ENCODE measurements at regions of chr22 and their contacts with region 1.

Region 1: GRCh38 chr22:32776397-32777186 is 24.9 kb upstream of the TIMP3 start:
- DNase-seq: no peak
- H3K4me3 ChIP-seq: no peak overlapping the region
- CTCF ChIP-seq: no peak

Region 2: GRCh38 chr22:32788909-32789624 is 12.5 kb after region 1 on chr22:
- CTCF ChIA-PET with region 1: interaction called, 12 read pairs
- POLR2A ChIA-PET with region 1: interaction called, 3 read pairs
- DNase-seq: no peak
- H3K4me3 ChIP-seq: no peak overlapping the region
- CTCF ChIP-seq: no peak